Head of caudate nucleus (tissue), 42 donors: ENCODE measurements at regions of chr14 and their contacts with region 1.

Region 1: GRCh38 chr14:102516531-102517415 is 7.2 kb upstream of the ANKRD9 start:
- DNase-seq: peak in 39 of 42 donors; percentile 19 to 86 (median 70)

Region 2: DNA sequence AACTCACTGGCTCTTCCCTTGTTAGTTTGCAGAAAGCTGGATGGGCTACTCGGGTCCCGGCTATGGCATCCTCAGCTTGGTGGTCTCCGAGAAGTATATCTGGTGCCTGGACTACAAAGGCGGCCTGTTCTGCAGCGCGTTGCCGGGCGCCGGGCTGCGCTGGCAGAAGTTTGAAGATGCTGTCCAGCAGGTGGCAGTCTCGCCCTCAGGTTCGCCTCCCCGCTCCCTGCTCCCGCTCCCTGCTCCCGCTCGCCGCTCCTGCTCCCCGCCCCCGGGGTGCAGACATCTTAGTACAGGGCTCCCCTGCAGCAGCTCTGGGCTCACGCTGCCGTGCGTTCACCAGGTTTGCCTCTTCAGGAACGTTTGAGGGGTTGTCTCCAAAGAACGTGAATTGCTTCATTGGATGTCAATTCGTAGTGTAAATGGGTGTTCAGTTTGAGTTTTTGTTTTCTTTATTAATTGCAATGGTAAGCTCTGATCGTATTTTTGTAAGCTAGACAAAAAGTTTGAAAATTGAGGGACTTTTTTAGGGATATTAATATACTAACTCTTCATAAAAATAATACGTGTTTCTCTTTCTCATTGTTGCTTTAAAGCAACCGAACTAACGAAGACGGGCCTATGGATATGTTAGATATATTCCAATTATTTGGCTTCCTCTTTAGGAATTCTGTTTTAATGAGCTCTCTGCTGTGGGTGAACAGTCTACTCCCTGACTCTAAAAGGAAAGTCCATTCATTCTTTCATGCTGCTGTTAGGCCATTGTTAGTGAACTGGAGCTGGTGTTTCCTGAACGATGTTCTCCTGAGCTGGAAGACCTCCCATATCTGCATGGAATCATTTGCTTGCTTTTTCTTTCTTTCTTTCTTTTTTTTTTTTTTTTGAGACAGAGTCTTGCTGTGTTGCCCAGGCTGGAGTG is 78.5 kb before region 1 on chr14:
- intact Hi-C with region 1: loop called (anchors 1 kb)
- DNase-seq: peak; percentile 80 to 98 (median 94)